Heart right ventricle (tissue), 16 donors: ENCODE measurements at regions of chr5 and their contacts with region 1.

Region 1: GRCh38 chr5:116557669-116558271 is 16.9 kb downstream of the SEMA6A start:
- DNase-seq: no peak
- ATAC-seq: peak in 1 of 8 donors; percentile 31
- H3K4me3 ChIP-seq: no peak overlapping the region
- H3K27ac ChIP-seq: no peak overlapping the region
- H3K4me1 ChIP-seq: peaks cover 0 to 66% (median 2%) of the 10 kb centered on the region in 9 donors
- H3K27me3 ChIP-seq: no peaks in the 10 kb centered on the region
- CTCF ChIP-seq: peak in 8 of 9 donors; percentile 19 to 70 (median 59)

Region 2: DNA sequence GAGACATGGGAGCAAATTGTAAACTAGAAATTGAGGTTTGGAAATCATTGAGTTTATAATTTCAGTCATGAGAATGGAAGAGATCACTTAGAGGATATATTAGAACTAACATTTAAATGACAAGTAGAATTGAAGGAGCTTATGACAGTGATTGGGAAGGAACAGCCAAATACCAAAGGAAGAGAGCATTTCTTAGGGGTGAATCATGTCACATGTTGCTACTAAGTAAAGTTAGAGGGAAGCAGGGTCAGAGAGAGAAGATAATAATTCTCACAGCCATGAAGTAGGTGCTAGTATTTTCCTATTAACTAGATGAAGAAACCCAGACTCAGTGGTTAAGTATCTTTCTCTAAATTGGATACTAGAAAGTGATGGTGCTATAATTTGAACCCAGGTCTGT is 413.7 kb before region 1 on chr5:
- intact Hi-C with region 1: loop called in 3 of 10 experiments (anchors 5 to 10 kb)
- DNase-seq: no peak
- ATAC-seq: no peak
- H3K4me3 ChIP-seq: no peak overlapping the region
- H3K27ac ChIP-seq: no peak overlapping the region
- H3K4me1 ChIP-seq: peaks cover 0 to 5% (median 0%) of the 10 kb centered on the region in 9 donors
- H3K27me3 ChIP-seq: no peaks in the 10 kb centered on the region
- CTCF ChIP-seq: no peak

Region 3: DNA sequence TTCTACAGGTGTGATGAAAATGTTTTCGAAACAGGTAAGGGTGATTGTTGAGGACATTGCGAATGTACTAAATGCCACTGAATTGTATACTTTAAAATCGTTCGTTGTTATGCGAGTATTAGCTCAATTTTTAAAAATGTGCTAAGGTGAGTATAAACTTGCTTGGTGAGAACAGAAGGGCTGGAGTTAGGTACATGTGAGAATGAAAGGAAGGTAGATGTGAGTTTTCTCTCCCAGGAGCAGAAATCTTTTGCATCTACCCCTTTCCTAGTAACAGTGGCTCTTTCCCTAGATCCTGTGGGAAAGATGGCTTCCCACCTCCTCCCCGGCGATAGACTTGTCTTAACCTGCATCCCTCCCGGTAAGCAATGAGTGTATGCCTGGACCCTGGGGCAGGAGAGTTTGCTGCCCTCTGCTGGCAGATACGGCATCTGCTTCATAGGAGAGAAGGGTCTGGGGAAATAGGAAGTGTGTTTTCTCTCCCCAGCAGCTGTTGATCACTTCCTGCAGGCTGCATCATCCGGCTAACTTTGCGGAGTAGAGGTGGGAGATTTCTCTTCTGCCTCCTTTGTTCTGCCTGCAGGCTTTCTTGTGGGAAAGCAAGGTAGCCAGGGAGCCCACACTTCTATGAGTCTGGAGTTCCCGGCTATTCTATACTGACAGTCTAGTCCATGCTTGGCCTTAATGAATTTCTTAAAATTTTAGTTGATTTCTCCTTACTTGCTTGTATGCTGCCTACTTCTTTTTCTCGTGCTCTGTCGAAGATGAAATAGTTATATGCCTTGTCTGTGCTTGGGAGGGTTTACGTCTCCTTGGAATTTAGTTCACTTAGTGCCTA is 390.1 kb after region 1 on chr5:
- intact Hi-C with region 1: no loop called
- DNase-seq: peak; percentile 51 to 59
- ATAC-seq: peak; percentile 76 to 91 (median 86)
- H3K4me3 ChIP-seq: no peak overlapping the region
- H3K27ac ChIP-seq: no peak overlapping the region
- H3K4me1 ChIP-seq: peaks cover 0 to 8% (median 0%) of the 10 kb centered on the region in 9 donors
- H3K27me3 ChIP-seq: no peaks in the 10 kb centered on the region
- CTCF ChIP-seq: peak; percentile 32 to 81 (median 77)